Dorsolateral prefrontal cortex (tissue), 120 donors: ENCODE measurements at regions of chr4 and their contacts with region 1.

Region 1: GRCh38 chr4:48668254-48669017 is 111.6 kb downstream of the FRYL start:
- DNase-seq: no peak
- H3K4me3 ChIP-seq: no peak overlapping the region
- H3K27ac ChIP-seq: peak overlapping the region in 17 of 59 donors; percentile 1 to 39 (median 19)
- H3K27me3 ChIP-seq: no peaks in the 10 kb centered on the region
- CTCF ChIP-seq: no peak

Region 2: GRCh38 chr4:48594180-48594579 is 74.3 kb before region 1 on chr4:
- intact Hi-C with region 1: no loop called
- DNase-seq: no peak
- H3K4me3 ChIP-seq: no peak overlapping the region
- H3K27ac ChIP-seq: peak overlapping the region in 8 of 59 donors; percentile 0 to 44 (median 14)
- H3K27me3 ChIP-seq: no peaks in the 10 kb centered on the region
- CTCF ChIP-seq: no peak

Region 3: GRCh38 chr4:48739560-48740019 is 71.2 kb after region 1 on chr4:
- intact Hi-C with region 1: no loop called
- DNase-seq: no peak
- H3K4me3 ChIP-seq: no peak overlapping the region
- H3K27ac ChIP-seq: no peak overlapping the region
- H3K27me3 ChIP-seq: no peaks in the 10 kb centered on the region
- CTCF ChIP-seq: no peak

Region 4: DNA sequence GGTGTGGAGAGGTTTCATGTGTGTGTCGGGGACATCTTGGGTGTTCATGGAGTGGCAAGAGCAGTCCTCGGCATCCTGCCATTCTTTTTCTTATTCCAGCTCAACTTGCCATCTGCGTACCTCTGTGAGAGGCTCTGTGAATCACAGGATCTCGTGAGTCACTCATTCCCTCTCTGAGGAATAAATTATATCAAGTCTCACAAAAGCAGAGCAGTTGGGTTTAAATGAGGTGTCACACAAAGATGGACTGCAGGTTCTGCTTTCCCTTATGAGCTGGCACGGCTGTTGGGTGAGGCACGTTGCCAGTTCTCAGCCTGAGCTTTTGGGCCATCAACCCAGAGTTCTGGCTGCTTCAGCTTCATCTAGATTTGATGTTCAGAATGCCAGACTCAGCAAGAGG is 244.9 kb after region 1 on chr4:
- intact Hi-C with region 1: no loop called
- DNase-seq: peak; percentile 32 to 86 (median 72)
- H3K4me3 ChIP-seq: no peak overlapping the region
- H3K27ac ChIP-seq: peak overlapping the region in 24 of 59 donors; percentile 12 to 75 (median 56)
- H3K27me3 ChIP-seq: no peaks in the 10 kb centered on the region
- CTCF ChIP-seq: no peak

Region 5: GRCh38 chr4:48963042-48963679 is 294.7 kb after region 1 on chr4:
- intact Hi-C with region 1: loop called (anchors 10 kb)
- DNase-seq: peak; percentile 33 to 78 (median 60)
- H3K4me3 ChIP-seq: no peak overlapping the region
- H3K27ac ChIP-seq: no peak overlapping the region
- H3K27me3 ChIP-seq: no peaks in the 10 kb centered on the region
- CTCF ChIP-seq: peak; percentile 82 to 100 (median 98)